ENCODE measurements at regions of chr15 and their contacts with region 1.

Region 1: GRCh38 chr15:52730173-52730572 is 51.0 kb upstream of the ATOSA start:
- DNase-seq: no peak
- ATAC-seq: no peak
- H3K4me3 ChIP-seq: no peak overlapping the region
- H3K27ac ChIP-seq: no peak overlapping the region
- H3K4me1 ChIP-seq: peaks cover 21% of the 10 kb centered on the region
- H3K27me3 ChIP-seq: no peaks in the 10 kb centered on the region
- CTCF ChIP-seq: no peak
- POLR2A ChIP-seq: no peak

Region 2: DNA sequence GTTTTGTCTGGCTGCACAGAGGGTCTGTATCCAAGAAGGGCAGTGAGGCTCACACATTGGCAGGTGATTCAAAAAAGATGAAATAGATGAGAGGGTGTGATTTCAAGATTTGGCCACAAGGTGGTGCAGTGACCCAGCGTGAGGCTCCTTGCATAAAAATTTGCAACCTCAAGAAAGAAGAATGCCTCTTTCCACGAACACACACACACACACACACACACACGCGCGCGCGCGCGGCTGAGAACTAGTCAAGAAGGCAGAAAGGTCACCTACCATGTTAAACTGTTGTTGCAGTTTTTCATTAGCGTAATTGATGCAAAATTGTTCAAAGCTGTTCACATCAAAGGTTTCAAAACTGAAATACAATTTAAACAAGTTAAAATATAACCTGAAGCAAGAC is 473.8 kb before region 1 on chr15:
- intact Hi-C with region 1: loop called (anchors 5 kb)
- DNase-seq: peak; percentile 69 to 79 (median 76)
- ATAC-seq: peak; percentile 77
- H3K4me3 ChIP-seq: no peak overlapping the region
- H3K27ac ChIP-seq: peak overlapping the region in 1 of 4 donors; percentile 8
- H3K4me1 ChIP-seq: peaks cover 30% of the 10 kb centered on the region
- H3K27me3 ChIP-seq: no peaks in the 10 kb centered on the region
- CTCF ChIP-seq: peak; percentile 67 to 87 (median 80)
- POLR2A ChIP-seq: no peak

Region 3: GRCh38 chr15:52326756-52327155 is 403.4 kb before region 1 on chr15:
- intact Hi-C with region 1: no loop called
- DNase-seq: no peak
- ATAC-seq: no peak
- H3K4me3 ChIP-seq: no peak overlapping the region
- H3K27ac ChIP-seq: no peak overlapping the region
- H3K4me1 ChIP-seq: peaks cover 27% of the 10 kb centered on the region
- H3K27me3 ChIP-seq: no peaks in the 10 kb centered on the region
- CTCF ChIP-seq: no peak
- POLR2A ChIP-seq: no peak

Region 4: DNA sequence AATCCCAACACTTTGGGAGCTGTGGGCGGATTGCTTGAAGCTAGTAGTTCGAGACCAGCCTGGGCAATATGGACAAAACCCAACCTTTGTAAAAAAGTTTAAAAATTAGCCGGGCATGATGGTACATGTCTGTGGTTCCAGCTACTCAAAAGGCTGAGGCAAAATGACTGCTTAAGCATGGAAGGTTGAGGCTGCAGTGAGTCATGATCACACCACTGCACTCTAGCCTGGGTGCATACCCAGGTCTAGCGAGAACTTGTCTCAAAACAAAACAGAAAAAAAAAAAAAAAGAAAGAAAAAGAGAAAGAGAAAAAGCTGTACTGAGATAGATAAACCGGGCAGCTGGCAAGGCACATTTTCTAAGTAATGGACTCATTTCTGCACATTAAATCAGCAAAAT is 172.0 kb before region 1 on chr15:
- intact Hi-C with region 1: no loop called
- DNase-seq: no peak
- ATAC-seq: no peak
- H3K4me3 ChIP-seq: no peak overlapping the region
- H3K27ac ChIP-seq: no peak overlapping the region
- H3K4me1 ChIP-seq: peaks cover 32% of the 10 kb centered on the region
- H3K27me3 ChIP-seq: no peaks in the 10 kb centered on the region
- CTCF ChIP-seq: no peak
- POLR2A ChIP-seq: no peak

Measured in body of pancreas (tissue), 4 donors.